SK-N-SH (cell line): ENCODE measurements at regions of chr2 and their contacts with region 1.

Region 1: DNA sequence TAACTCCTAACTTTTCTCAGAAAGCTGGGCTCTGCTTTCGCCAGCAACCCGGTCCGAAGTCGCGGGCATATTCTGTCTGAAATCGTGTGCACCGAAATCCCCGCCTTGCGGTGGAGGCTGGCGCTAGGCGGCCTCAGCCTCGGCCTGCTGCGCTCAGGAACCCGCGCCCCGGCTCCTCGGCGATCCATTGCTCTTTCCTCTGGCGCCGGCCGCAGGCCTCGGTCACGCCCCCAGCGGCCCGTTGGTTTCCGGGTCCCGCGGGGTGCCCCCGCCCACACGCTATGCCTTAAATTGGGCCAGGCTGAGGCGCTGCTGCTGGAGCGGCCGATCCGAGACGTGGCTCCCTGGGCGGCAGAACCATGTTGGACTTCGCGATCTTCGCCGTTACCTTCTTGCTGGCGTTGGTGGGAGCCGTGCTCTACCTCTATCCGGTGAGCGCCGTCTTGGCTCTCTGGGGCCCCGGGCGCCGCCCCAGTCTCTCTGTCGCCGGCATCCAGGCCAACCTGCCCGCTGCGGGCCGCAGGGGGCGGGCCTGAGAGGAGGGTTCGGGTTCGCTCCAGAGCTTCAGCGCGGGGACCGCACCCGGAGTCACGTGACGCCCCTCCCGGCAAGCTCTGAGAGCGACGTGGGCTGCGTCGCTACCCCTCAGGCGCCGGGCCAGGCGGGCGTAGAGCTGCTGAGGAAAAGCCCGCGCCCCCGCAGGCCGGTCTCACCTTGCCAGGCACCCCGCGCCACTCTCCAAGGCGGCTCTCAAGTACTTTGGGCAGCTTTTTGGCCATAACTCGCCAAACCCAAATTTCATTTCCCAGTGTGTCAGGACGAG is at the start of gene CYP20A1:
- DNase-seq: peak; percentile 94
- H3K4me3 ChIP-seq: peak within 1 kb of the TSS; percentile 59 to 94
- H3K27ac ChIP-seq: peak within 1 kb of the TSS; percentile 87 to 98
- H3K4me1 ChIP-seq: peaks cover 0 to 10% of the 10 kb centered on the region in 2 experiments; a peak in 1 of 4 replicates
- H3K27me3 ChIP-seq: no peaks in the 10 kb centered on the region
- CTCF ChIP-seq: peak; percentile 43
- EP300 ChIP-seq: peak in 1 of 2 experiments; percentile 57; a peak in 1 of 4 replicates
- RAD21 ChIP-seq: peak; percentile 30
- polyA plus RNA-seq, gene CYP20A1: 10.6 and 12.3 TPM in 2 replicates

Region 2: GRCh38 chr2:203164311-203164935 is 74.5 kb before region 1 on chr2:
- CTCF ChIA-PET with region 1: no interaction called
- POLR2A ChIA-PET with region 1: no interaction called
- DNase-seq: no peak
- H3K4me3 ChIP-seq: no peak overlapping the region
- H3K27ac ChIP-seq: no peak overlapping the region
- H3K4me1 ChIP-seq: no peaks in the 10 kb centered on the region
- H3K27me3 ChIP-seq: no peaks in the 10 kb centered on the region
- CTCF ChIP-seq: no peak
- EP300 ChIP-seq: no peak
- RAD21 ChIP-seq: no peak

Region 3: DNA sequence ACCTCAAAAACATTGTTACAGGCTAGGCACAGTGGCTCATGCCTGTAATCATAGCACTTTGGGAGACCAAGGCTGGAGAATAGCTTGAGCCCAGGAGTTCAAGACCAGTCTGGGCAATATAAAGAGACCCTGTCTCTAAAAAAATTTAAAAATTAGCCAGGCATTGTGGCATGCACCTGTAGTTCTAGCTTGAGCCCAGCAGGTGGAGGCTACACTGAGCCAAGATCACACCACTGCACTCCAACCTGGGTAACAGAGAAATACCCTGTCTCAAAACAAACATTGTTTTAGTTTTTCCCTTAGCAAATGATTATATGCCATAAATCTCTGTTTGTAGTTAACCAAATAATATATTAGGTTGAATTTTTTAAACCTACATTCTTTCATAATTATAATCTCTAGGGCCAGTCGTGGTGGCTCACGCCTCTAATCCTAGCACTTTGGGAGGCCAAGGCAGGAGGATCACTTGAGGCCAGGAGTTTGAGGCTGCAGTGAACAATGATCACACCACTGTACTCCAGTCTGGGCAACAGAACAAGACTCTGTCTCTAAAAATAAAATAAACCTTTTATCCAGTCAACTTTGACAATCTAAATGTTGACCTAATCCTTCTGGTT is 13.4 kb before region 1 on chr2:
- CTCF ChIA-PET with region 1: interaction called, 13 read pairs
- POLR2A ChIA-PET with region 1: no interaction called
- DNase-seq: no peak
- H3K4me3 ChIP-seq: no peak overlapping the region
- H3K27ac ChIP-seq: no peak overlapping the region
- H3K4me1 ChIP-seq: peaks cover 0 to 3% of the 10 kb centered on the region in 2 experiments; a peak in 2 of 4 replicates
- H3K27me3 ChIP-seq: no peaks in the 10 kb centered on the region
- CTCF ChIP-seq: peak; percentile 70
- EP300 ChIP-seq: no peak
- RAD21 ChIP-seq: peak; percentile 54

Region 4: DNA sequence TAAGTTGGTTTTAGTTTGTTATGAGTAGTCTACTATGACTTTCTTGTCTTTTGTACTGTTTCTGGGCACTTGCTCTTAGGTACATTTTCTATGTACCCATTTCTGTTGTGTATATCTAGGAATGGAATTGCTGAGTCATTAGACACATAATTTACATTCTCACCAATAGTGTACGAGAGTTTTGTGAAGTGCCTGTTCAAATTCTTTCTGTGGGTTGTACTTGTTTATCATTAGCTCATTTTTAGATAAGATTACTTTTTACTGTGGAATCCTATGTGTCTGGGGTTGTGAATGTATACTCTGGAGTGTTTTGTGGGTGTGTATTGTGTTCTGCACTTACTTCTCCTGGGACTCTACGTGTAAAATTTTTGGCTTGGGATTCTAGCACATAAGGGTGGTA is 430.9 kb after region 1 on chr2:
- CTCF ChIA-PET with region 1: no interaction called
- POLR2A ChIA-PET with region 1: no interaction called
- DNase-seq: no peak
- H3K4me3 ChIP-seq: no peak overlapping the region
- H3K27ac ChIP-seq: no peak overlapping the region
- H3K4me1 ChIP-seq: peaks cover 0 to 4% of the 10 kb centered on the region in 2 experiments; a peak in 1 of 4 replicates
- H3K27me3 ChIP-seq: no peaks in the 10 kb centered on the region
- CTCF ChIP-seq: no peak
- EP300 ChIP-seq: no peak
- RAD21 ChIP-seq: no peak